PC-9 (cell line): ENCODE measurements at regions of chr9 and their contacts with region 1.

Region 1: GRCh38 chr9:131481441-131482342 is 21.0 kb upstream of the POMT1 start:
- DNase-seq: no peak
- H3K4me3 ChIP-seq: no peak overlapping the region
- H3K27ac ChIP-seq: no peak overlapping the region
- H3K4me1 ChIP-seq: no peaks in the 10 kb centered on the region
- H3K27me3 ChIP-seq: no peaks in the 10 kb centered on the region
- CTCF ChIP-seq: no peak

Region 2: DNA sequence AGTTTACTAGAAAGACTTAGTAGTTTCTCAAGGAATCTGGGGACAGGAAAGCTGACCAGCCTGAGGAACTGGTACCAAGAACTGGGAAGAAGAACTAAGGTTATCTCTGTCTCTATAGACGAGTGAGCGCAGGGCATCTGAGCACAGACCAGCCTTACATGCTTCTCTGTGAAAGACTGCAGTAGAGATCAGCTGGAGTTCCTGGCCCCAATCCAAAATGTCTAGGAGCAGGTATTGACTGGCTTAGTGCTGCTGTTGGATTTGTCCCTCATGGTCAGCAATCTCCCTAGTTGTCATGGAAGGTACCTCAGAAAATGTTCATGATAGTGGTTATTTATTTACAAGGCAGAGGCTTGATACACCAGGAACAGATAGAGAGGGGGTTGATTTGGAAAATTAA is 343.0 kb before region 1 on chr9:
- CTCF ChIA-PET with region 1: interaction called, 10 read pairs
- POLR2A ChIA-PET with region 1: no interaction called
- intact Hi-C with region 1: no loop called
- DNase-seq: no peak
- H3K4me3 ChIP-seq: no peak overlapping the region
- H3K27ac ChIP-seq: no peak overlapping the region
- H3K4me1 ChIP-seq: no peaks in the 10 kb centered on the region
- H3K27me3 ChIP-seq: no peaks in the 10 kb centered on the region
- CTCF ChIP-seq: no peak

Region 3: GRCh38 chr9:131495785-131496184 is 14.1 kb after region 1 on chr9:
- CTCF ChIA-PET with region 1: no interaction called
- POLR2A ChIA-PET with region 1: no interaction called
- intact Hi-C with region 1: no loop called
- DNase-seq: no peak
- H3K4me3 ChIP-seq: no peak overlapping the region
- H3K27ac ChIP-seq: no peak overlapping the region
- H3K4me1 ChIP-seq: no peaks in the 10 kb centered on the region
- H3K27me3 ChIP-seq: no peaks in the 10 kb centered on the region
- CTCF ChIP-seq: no peak